A549 (cell line): ENCODE measurements at regions of chr20 and their contacts with region 1.

Region 1: DNA sequence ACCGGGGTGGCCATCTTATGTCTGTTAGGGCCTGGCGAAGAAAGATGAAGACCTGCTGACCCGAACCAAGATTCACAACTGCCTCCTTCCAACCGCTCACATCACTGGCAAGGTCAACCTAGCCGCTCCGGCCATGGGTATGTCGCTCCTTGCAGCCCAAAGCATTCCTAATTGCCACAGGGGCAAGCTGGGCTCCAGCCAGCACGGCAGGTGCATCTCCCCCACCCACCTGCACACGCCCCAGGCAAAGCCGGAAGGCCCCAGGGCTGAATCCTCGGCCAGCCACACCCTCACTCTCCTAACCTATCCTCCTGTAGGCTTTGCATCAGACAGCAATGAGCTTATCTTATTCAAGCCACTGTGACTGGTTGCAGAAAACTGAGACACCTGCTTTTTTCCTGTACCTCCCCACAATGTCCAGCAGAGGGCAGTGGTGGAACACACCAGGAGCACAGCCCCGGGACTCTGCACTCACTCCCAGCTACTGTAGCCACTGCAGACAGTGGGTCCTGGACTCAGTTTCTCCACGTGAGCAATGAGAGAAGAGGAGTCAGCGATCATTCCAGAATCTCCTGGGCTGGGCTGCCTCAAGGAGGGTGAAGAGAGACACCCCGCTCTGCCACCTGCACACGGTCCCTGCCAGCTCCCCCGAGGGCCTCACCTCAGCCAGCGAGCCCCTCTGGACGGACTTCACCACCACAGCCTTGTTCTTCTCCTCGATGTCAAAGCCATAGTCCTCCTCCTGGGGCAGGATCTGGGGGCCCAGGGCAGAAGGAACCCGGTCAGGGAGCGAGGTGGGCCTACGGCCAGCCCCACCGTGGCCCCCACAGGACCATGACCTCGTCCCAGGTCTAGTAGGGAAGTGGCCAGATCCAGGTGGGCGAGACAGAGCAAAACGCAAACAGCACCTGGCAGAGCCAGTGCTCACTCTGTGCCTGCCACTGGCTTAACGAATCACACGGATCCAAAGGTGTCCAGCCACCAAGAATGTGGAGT is 170.0 kb downstream of the PREX1 start:
- DNase-seq: peak; percentile 78 to 92
- ATAC-seq: peak; percentile 83 to 91
- H3K4me3 ChIP-seq: no peak overlapping the region
- H3K27ac ChIP-seq: no peak overlapping the region
- H3K4me1 ChIP-seq: no peaks in the 10 kb centered on the region
- CTCF ChIP-seq: peak; percentile 94
- EP300 ChIP-seq: no peak
- POLR2A ChIP-seq: no peak
- RAD21 ChIP-seq: peak; percentile 96 to 99

Region 2: DNA sequence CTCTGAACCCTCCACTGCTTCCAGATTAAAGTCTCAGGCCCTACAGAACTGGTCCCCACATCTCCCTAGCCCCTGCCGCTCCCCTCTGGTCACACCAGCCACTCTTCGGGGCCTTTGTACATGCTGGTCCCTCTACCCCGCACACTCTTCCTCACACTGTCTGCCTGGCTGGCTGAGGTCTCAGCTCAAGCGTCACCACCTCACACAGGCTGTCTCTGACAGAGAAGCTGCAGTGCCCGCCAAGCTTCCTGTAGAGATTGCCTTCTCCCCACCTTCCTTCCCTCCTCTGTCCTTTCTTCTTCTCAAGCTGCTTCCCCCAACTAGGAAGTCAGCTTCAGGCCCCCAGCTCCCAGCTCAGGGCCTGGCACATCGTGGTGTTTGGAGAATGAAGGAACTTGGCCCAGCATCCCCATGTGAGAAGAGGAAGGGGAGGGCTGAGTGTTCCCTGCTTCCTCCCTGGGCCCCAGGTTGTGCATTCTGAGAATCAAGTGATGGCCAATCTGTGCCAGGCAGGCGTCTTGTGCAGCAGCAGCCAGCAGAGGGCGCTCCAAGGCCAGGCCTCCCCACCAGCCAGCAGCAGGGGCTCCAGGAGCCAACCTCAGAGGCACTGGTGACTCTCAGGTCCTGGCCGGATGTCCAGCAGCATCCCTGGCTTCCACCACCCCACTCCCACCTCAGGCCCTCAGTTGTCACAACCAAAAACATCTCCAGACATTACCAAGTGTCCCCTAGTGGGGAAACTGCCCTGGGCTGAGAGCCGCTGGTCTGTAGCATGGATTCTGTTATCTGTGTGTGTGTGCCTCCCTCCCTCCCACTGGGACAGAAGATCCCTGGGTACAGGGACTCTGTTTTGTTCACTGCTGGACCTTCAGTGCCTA is 22.1 kb before region 1 on chr20:
- CTCF ChIA-PET with region 1: interaction called, 17 read pairs
- POLR2A ChIA-PET with region 1: no interaction called
- DNase-seq: peak; percentile 54 to 73
- ATAC-seq: peak; percentile 80 to 95
- H3K4me3 ChIP-seq: no peak overlapping the region
- H3K27ac ChIP-seq: no peak overlapping the region
- H3K4me1 ChIP-seq: no peaks in the 10 kb centered on the region
- CTCF ChIP-seq: peak; percentile 64
- EP300 ChIP-seq: no peak
- POLR2A ChIP-seq: no peak
- RAD21 ChIP-seq: peak; percentile 77 to 82

Region 3: GRCh38 chr20:48682529-48683251 is 24.9 kb after region 1 on chr20:
- CTCF ChIA-PET with region 1: interaction called, 28 read pairs
- POLR2A ChIA-PET with region 1: no interaction called
- DNase-seq: no peak
- ATAC-seq: no peak
- H3K4me3 ChIP-seq: no peak overlapping the region
- H3K27ac ChIP-seq: no peak overlapping the region
- H3K4me1 ChIP-seq: 0 out of 3 replicates have a peak, but pooled peaks cover 4% of the 10 kb centered on the region
- CTCF ChIP-seq: no peak
- EP300 ChIP-seq: no peak
- POLR2A ChIP-seq: no peak
- RAD21 ChIP-seq: no peak

Region 4: DNA sequence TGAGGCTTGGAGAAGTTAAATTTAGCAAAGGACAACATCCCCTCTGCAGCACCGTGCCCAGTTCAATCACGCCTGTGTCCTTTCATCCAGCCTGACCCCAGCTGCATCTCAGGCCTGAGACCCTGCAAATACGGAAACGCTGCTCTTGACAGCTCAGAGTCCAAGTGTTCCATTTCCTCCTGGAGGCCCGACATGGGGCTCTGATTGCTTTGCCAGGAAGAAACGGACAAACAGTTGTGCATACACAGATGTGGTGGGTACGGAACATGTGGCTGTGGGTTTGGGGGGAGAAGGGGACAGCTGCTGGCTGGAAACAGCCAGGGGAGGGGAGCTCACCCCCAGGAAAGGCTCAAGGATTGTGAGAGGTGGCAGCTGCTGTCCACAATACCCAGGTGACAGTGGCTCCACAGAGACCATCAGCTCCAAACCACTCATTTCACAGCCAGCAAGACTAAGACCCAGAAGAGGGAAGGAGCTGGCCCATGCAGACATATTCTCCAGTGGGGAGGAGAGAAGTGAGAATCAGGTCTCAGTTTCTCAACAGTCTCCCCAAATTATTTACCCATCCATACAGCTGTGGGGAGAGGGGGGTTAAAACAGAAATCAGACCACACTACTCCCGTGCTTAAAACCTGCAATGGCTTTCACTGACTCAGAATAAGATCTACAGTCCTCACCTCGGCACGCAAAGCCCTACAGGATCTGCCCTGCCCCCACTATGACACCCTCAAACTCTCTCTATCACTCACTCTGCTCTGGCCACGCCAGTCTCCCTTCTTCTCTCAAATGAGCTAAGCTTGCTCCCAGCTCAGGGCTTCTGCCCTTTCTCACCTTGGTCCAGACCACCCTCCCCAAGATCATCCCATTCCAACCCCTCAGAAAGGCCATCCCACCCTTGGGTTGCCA is 80.9 kb after region 1 on chr20:
- CTCF ChIA-PET with region 1: interaction called, 17 read pairs
- POLR2A ChIA-PET with region 1: no interaction called
- DNase-seq: no peak
- ATAC-seq: no peak
- H3K4me3 ChIP-seq: no peak overlapping the region
- H3K27ac ChIP-seq: no peak overlapping the region
- H3K4me1 ChIP-seq: no peaks in the 10 kb centered on the region
- CTCF ChIP-seq: no peak
- EP300 ChIP-seq: no peak
- POLR2A ChIP-seq: no peak
- RAD21 ChIP-seq: no peak

Region 5: DNA sequence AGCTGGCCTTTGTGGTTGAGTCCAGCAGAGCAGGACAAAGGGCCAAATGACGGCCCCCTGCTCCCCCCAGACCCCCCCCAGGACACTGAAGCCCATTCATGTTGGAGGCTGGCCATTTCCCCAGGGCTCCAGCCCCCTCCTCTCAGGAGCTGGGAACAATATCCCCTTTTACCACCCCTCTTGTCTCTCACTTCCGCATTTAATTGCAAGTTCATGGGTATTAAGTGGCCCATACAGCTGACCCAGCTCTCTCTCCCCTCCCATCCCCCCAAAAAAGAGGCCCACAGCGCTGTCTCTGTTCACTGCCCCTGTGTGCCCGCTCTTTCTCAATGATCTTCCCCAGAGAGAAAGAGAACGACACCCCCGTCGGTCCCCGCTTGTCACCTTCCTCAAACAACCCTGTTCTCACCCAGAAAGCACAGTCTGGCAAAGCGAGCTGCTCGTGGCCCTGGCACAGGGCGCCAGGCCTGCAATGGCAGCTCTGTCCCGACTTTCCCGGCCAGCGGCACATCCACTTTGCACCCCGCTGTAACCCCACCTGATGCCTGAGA is 139.6 kb after region 1 on chr20:
- CTCF ChIA-PET with region 1: interaction called, 11 read pairs
- POLR2A ChIA-PET with region 1: no interaction called
- DNase-seq: no peak
- ATAC-seq: no peak
- H3K4me3 ChIP-seq: no peak overlapping the region
- H3K27ac ChIP-seq: no peak overlapping the region
- H3K4me1 ChIP-seq: peaks cover 11% of the 10 kb centered on the region; the same call in 2 of the 3 replicates
- CTCF ChIP-seq: no peak
- EP300 ChIP-seq: no peak
- POLR2A ChIP-seq: no peak
- RAD21 ChIP-seq: no peak

Region 6: GRCh38 chr20:48858075-48858790 is 200.5 kb after region 1 on chr20:
- CTCF ChIA-PET with region 1: interaction called, 11 read pairs
- POLR2A ChIA-PET with region 1: no interaction called
- DNase-seq: no peak
- ATAC-seq: no peak
- H3K4me3 ChIP-seq: no peak overlapping the region
- H3K27ac ChIP-seq: peak overlapping the region; percentile 7 to 39; a peak in 2 of 6 replicates
- H3K4me1 ChIP-seq: peaks cover 22% of the 10 kb centered on the region
- CTCF ChIP-seq: no peak
- EP300 ChIP-seq: no peak
- POLR2A ChIP-seq: no peak
- RAD21 ChIP-seq: no peak

Region 7: GRCh38 chr20:48921151-48921898 is 263.6 kb after region 1 on chr20 and contains the start of gene ARFGEF2:
- CTCF ChIA-PET with region 1: interaction called, 494 read pairs
- POLR2A ChIA-PET with region 1: no interaction called
- DNase-seq: peak; percentile 91 to 92
- ATAC-seq: peak; percentile 90 to 94
- H3K4me3 ChIP-seq: peak within 1 kb of the TSS; percentile 89
- H3K27ac ChIP-seq: peak within 1 kb of the TSS; percentile 96 to 98
- H3K4me1 ChIP-seq: peaks cover 22% of the 10 kb centered on the region
- CTCF ChIP-seq: no peak
- EP300 ChIP-seq: no peak
- POLR2A ChIP-seq: peak; percentile 88
- RAD21 ChIP-seq: no peak
- polyA plus RNA-seq, gene ARFGEF2: 24.3 and 27.8 TPM in 2 replicates